SK-N-SH (cell line): ENCODE measurements at regions of chr13 and their contacts with region 1.

Region 1: GRCh38 chr13:51814825-51815650 is 11.1 kb upstream of the DHRS12 start:
- DNase-seq: peak; percentile 79
- H3K4me3 ChIP-seq: peak overlapping the region; percentile 23 to 47; a peak in 3 of 4 replicates
- H3K27ac ChIP-seq: no peak overlapping the region
- H3K4me1 ChIP-seq: peaks cover 0 to 14% of the 10 kb centered on the region in 2 experiments; a peak in 1 of 4 replicates
- H3K27me3 ChIP-seq: no peaks in the 10 kb centered on the region
- CTCF ChIP-seq: peak; percentile 83
- EP300 ChIP-seq: no peak
- RAD21 ChIP-seq: peak; percentile 83

Region 2: DNA sequence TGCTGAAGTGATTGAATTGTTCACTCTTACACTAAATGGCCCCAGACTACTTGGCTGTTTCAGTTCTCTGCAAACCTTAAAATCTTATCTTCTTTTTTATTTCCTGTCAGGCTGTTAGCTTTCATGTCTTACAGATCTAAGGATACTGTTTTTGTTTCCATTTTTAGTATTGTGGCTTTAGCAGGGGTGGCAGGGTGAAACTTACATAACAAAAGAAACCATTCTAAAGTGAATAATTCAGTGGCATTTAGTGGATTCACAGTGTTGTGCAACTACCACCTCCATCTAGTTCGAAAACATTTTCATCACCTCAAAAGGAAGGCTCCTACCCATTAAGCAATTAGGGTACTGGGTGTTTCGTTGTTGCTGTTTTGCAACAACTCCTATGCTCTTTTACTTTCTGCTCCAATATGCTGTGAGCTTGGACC is 10.1 kb after region 1 on chr13:
- CTCF ChIA-PET with region 1: interaction called, 19 read pairs
- POLR2A ChIA-PET with region 1: no interaction called
- DNase-seq: no peak
- H3K4me3 ChIP-seq: no peak overlapping the region
- H3K27ac ChIP-seq: no peak overlapping the region; a peak in 1 of 4 replicates
- H3K4me1 ChIP-seq: peaks cover 0 to 16% of the 10 kb centered on the region in 2 experiments; a peak in 1 of 4 replicates
- H3K27me3 ChIP-seq: no peaks in the 10 kb centered on the region; the same call in none of the 2 replicates
- CTCF ChIP-seq: no peak
- EP300 ChIP-seq: no peak
- RAD21 ChIP-seq: no peak

Region 3: DNA sequence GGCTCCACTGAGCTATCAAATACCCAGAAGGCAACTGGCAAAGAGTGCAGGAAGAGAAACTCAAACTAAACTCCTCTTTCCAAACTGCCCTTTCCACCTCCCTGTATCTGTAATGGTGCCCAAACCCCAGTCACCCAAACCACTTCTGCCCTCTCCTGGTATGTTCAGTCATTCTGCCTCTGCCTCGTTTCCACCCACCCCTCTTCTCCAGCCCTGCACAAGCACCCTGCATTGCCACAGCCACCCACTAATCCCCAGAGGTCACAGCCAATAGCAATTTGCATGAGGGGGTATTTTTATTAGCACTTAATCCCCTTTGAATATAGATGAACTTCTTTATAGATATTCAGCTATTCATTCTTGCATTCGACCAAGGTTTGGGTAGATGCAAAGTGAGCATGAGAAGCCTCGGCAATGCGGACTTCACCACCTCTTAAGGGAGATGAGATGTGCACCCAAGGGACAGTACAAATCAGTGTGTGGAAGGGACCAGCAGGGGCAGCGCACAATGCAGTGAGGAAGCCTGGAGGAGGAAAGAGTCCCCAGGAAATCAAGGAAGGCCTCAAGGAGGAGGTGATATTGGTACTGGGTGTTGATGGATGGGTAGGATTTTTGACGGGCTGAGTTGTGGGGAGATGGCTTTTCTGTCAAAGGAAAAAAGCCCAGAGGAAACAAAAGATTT is 17.6 kb after region 1 on chr13:
- CTCF ChIA-PET with region 1: interaction called, 31 read pairs
- POLR2A ChIA-PET with region 1: no interaction called
- DNase-seq: peak; percentile 39
- H3K4me3 ChIP-seq: no peak overlapping the region
- H3K27ac ChIP-seq: no peak overlapping the region
- H3K4me1 ChIP-seq: peaks cover 0 to 3% of the 10 kb centered on the region in 2 experiments; a peak in 1 of 4 replicates
- H3K27me3 ChIP-seq: no peaks in the 10 kb centered on the region; the same call in none of the 2 replicates
- CTCF ChIP-seq: peak; percentile 35
- EP300 ChIP-seq: no peak
- RAD21 ChIP-seq: peak; percentile 67

Region 4: GRCh38 chr13:51844862-51845573 is 30.0 kb after region 1 on chr13 and contains the start of gene TMEM272:
- CTCF ChIA-PET with region 1: interaction called, 33 read pairs
- POLR2A ChIA-PET with region 1: no interaction called
- DNase-seq: peak; percentile 87
- H3K4me3 ChIP-seq: peak within 1 kb of the TSS; percentile 25 to 57
- H3K27ac ChIP-seq: no peak within 1 kb of the TSS
- H3K4me1 ChIP-seq: peaks cover 2 to 7% of the 10 kb centered on the region in 2 experiments; a peak in 2 of 4 replicates
- H3K27me3 ChIP-seq: no peaks in the 10 kb centered on the region
- CTCF ChIP-seq: peak; percentile 84
- EP300 ChIP-seq: no peak
- RAD21 ChIP-seq: peak; percentile 51
- polyA plus RNA-seq, gene TMEM272: not detected in 2 replicates